IMR-90 (cell line): ENCODE measurements at regions of chr4 and their contacts with region 1.

Region 1: DNA sequence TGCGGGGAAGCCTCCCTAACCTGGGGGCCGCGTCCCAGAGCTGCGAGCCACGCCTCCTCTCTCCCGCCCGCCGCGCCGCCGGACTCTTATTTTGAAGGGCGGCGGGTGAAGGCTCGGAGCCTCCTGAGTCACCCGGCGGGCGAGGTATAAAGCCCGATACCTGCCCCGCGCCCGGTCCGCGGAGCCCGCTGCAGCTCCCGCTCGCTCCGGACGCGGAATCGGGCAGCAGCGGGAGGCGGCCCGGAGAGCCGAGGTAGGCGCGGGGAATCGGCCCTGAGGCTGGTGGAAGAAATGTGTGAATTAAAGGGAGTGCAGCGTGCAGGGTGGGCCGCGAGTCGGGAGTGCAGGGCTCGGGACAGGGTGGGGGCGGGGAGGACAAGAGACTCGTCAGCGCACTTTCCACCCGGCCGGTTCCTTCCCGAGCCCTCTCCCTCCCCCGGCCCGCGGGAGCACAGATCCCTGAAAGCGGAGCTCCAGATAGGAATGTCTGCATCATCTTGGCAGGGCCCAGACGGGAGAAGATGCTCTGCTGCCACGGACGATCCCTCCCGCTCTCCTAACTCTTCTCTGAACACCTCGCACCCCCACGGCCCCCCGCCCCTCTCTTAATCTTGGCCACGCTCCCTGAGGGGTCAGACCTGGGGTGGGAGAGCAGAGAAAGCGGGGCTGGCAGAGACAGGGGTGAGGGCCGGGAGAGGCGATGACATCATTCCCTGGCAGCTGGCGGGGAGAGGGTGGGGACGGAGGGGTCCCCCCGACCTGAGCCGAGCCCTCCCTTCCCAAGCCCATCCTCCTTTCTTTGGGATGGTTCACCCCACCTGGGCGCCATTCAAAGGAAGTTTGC is 177.9 kb downstream of the CBR4 start:
- DNase-seq: peak; percentile 78
- ATAC-seq: peak; percentile 73
- H3K4me3 ChIP-seq: peak overlapping the region; percentile 81
- H3K27ac ChIP-seq: peak overlapping the region; percentile 98
- H3K4me1 ChIP-seq: peaks cover 8% of the 10 kb centered on the region
- H3K27me3 ChIP-seq: no peaks in the 10 kb centered on the region
- CTCF ChIP-seq: no peak
- POLR2A ChIP-seq: peak; percentile 99
- RAD21 ChIP-seq: peak; percentile 7; the same call in 1 of the 2 replicates

Region 2: DNA sequence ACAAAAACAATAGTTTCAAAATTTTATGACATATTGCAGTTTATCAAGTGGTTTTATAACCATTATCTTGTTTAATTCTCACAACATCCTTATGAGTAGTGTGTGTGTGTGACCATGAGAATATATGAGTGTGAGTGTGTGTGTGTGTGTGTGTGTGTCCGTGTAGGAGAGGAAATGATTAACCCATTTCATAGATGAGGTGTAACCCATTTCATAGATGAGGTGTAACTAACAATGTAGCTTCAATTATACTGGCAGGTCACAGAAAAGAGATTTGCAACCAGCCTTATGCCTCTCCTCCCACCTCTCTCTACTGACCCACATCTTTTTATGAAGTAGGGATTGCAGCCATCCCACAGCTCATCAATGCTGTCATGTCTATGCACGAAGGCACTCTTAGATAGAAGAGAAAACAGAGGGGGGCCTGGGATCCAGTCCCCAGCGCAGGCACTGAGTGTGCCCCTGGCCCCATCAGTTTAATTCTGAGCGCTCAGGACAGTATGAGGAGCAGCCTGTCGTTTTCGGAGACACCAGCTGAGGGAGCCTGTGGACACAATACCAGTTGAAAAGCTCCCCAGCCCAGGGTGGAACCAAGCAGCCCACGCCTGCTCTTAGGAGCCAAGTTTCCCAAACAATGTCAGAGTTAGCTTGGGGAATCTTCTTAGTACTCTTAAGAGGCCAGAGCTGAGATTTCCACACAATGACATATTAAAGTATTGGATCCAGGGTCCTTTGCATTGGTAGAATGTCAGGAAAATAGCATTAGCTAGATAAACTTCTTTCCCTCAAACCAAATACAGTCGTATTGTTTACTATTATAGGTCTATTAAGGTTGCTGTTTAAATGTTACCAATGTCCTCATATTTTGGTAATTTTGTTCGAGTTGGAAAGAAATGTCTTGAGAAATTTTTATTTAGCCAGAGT is 246.7 kb before region 1 on chr4:
- CTCF ChIA-PET with region 1: interaction called, 5 read pairs
- POLR2A ChIA-PET with region 1: no interaction called
- dilution Hi-C with region 1: no loop called
- in situ Hi-C with region 1: no loop called
- intact Hi-C with region 1: loop called (anchors 1 kb)
- DNase-seq: peak; percentile 82
- ATAC-seq: peak; percentile 87
- H3K4me3 ChIP-seq: no peak overlapping the region
- H3K27ac ChIP-seq: no peak overlapping the region
- H3K4me1 ChIP-seq: peaks cover 18% of the 10 kb centered on the region
- H3K27me3 ChIP-seq: no peaks in the 10 kb centered on the region
- CTCF ChIP-seq: peak; percentile 76
- POLR2A ChIP-seq: no peak
- RAD21 ChIP-seq: peak; percentile 88

Region 3: DNA sequence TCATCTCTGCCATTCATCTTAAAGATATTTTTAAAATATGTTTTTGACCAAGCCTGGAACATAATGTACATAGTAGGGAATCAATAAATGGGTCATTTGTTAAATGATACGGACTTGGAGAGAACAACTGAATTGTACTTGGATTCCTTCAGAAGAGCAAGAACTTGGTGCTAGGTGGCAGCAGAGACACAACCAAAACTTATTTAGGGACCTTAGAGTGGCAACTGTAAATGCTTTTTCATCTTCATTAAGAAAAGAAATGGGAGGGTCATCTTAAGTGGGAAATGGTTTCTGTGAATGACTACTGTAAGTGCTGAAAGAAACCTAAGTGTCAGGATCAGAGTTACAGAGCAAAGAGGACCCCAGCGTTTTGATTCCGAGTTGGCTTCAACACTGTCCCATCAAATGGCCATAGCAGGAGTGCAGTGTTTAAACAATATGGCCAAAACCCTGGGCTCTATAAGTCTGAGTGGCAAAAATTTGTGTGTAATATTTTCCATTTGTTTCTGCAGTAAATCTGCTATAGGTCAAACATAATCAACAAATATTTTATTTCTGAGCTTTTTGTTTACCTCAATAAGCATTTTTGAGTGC is 121.7 kb before region 1 on chr4:
- CTCF ChIA-PET with region 1: interaction called, 3 read pairs
- POLR2A ChIA-PET with region 1: interaction called, 10 read pairs
- dilution Hi-C with region 1: no loop called
- in situ Hi-C with region 1: no loop called
- intact Hi-C with region 1: loop called (anchors 1 kb)
- DNase-seq: peak; percentile 79
- ATAC-seq: peak; percentile 77
- H3K4me3 ChIP-seq: no peak overlapping the region
- H3K27ac ChIP-seq: no peak overlapping the region
- H3K4me1 ChIP-seq: peaks cover 11% of the 10 kb centered on the region
- H3K27me3 ChIP-seq: no peaks in the 10 kb centered on the region
- CTCF ChIP-seq: peak; percentile 71
- POLR2A ChIP-seq: no peak
- RAD21 ChIP-seq: peak; percentile 80

Region 4: GRCh38 chr4:168765726-168766125 is 66.4 kb before region 1 on chr4:
- CTCF ChIA-PET with region 1: no interaction called
- POLR2A ChIA-PET with region 1: interaction called, 17 read pairs
- dilution Hi-C with region 1: no loop called
- in situ Hi-C with region 1: no loop called
- intact Hi-C with region 1: no loop called
- DNase-seq: peak; percentile 38
- ATAC-seq: no peak
- H3K4me3 ChIP-seq: no peak overlapping the region
- H3K27ac ChIP-seq: no peak overlapping the region
- H3K4me1 ChIP-seq: peaks cover 24% of the 10 kb centered on the region
- H3K27me3 ChIP-seq: no peaks in the 10 kb centered on the region
- CTCF ChIP-seq: no peak
- POLR2A ChIP-seq: no peak
- RAD21 ChIP-seq: no peak

Region 5: DNA sequence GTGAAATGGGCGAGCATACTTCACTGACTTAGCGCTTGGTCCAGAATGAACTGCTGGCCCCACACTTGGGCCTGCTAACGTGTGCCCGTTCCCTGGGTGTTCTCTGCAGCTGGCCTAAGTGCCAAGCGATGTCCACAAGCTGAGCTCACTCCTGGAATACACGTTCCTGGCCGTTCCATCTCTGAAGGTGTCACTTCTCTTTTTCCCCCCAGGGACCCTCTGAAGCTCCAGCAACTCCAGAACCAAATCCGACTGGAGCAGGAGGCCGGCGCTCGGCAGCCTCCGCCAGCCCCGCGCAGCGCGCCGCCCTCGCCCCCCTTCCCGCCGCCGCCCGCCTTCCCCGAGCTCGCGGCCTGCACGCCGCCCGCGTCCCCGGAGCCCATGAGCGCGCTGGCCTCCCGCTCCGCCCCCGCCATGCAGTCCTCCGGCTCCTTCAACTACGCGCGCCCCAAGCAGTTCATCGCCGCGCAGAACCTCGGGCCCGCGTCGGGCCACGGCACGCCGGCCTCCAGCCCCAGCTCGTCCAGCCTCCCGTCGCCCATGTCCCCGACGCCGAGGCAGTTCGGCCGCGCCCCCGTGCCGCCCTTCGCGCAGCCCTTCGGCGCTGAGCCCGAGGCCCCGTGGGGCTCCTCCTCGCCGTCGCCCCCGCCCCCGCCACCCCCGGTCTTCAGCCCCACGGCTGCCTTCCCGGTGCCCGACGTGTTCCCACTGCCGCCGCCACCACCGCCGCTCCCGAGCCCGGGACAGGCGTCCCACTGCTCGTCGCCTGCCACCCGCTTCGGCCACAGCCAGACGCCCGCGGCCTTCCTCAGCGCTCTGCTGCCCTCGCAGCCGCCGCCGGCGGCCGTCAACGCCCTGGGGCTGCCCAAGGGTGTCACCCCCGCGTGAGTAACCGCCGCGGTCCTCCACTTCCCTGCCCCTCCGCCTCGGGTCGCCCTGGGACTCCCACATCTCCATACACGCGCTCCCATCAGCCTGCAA is 45.7 kb after region 1 on chr4:
- CTCF ChIA-PET with region 1: no interaction called
- POLR2A ChIA-PET with region 1: interaction called, 10 read pairs
- dilution Hi-C with region 1: no loop called
- in situ Hi-C with region 1: no loop called
- intact Hi-C with region 1: no loop called
- DNase-seq: no peak
- ATAC-seq: peak; percentile 53
- H3K4me3 ChIP-seq: no peak overlapping the region; the same call in 1 of the 2 replicates
- H3K27ac ChIP-seq: peak overlapping the region; percentile 45
- H3K4me1 ChIP-seq: peaks cover 27% of the 10 kb centered on the region
- H3K27me3 ChIP-seq: no peaks in the 10 kb centered on the region
- CTCF ChIP-seq: no peak
- POLR2A ChIP-seq: no peak
- RAD21 ChIP-seq: 0 out of 2 replicates have a peak, but pooled peaks have one; percentile 1

Region 6: GRCh38 chr4:169128902-169129301 is 296.8 kb after region 1 on chr4:
- CTCF ChIA-PET with region 1: no interaction called
- POLR2A ChIA-PET with region 1: no interaction called
- dilution Hi-C with region 1: no loop called
- in situ Hi-C with region 1: no loop called
- intact Hi-C with region 1: no loop called
- DNase-seq: no peak
- ATAC-seq: no peak
- H3K4me3 ChIP-seq: no peak overlapping the region
- H3K27ac ChIP-seq: no peak overlapping the region
- H3K4me1 ChIP-seq: peaks cover 6% of the 10 kb centered on the region; the same call in 1 of the 2 replicates
- H3K27me3 ChIP-seq: no peaks in the 10 kb centered on the region
- CTCF ChIP-seq: no peak
- POLR2A ChIP-seq: no peak
- RAD21 ChIP-seq: no peak